ENCODE measurements at regions of chr2 and their contacts with region 1.

Region 1: GRCh38 chr2:29010946-29011345 is 29.8 kb downstream of the TOGARAM2 start:
- DNase-seq: no peak
- ATAC-seq: peak; percentile 29
- H3K4me3 Mint-ChIP-seq: no peak overlapping the region
- H3K27ac Mint-ChIP-seq: no peak overlapping the region
- H3K4me1 Mint-ChIP-seq: peaks cover 46% of the 10 kb centered on the region
- H3K27me3 Mint-ChIP-seq: peaks cover 5% of the 10 kb centered on the region
- CTCF ChIP-seq: no peak

Region 2: DNA sequence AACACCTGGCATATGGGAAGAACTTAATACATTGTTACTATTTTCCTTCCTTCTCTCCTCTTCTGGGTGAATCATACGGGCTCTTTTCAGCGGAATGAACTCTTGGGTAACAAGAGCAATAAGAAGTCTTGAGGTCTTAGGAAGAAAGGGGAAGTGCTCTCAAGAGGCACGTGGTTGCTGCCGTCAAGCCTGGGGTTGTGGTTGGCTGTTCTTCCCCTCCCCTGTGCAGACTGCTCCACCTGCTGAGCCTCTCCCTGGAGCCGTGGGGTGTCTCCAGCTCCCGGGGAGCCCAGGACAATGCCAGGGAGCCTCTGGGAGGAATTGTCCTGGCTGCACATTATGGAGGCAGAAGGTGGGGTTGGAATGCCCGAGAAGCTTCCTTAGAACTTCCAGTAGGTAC is 10.5 kb before region 1 on chr2:
- CTCF ChIA-PET with region 1: no interaction called
- POLR2A ChIA-PET with region 1: interaction called, 3 read pairs
- intact Hi-C with region 1: loop called (anchors 1 kb)
- DNase-seq: peak; percentile 39
- ATAC-seq: peak; percentile 98
- H3K4me3 Mint-ChIP-seq: peak overlapping the region; percentile 1
- H3K27ac Mint-ChIP-seq: peak overlapping the region; percentile 9
- H3K4me1 Mint-ChIP-seq: peaks cover 11% of the 10 kb centered on the region
- H3K27me3 Mint-ChIP-seq: no peaks in the 10 kb centered on the region
- CTCF ChIP-seq: no peak